PC-3 (cell line): ENCODE measurements at regions of chr17 and their contacts with region 1.

Region 1: GRCh38 chr17:63549946-63550807 is at the start of gene DCAF7:
- DNase-seq: peak; percentile 100
- ATAC-seq: peak; percentile 91
- H3K4me3 ChIP-seq: peak within 1 kb of the TSS; percentile 89
- H3K27ac ChIP-seq: peak within 1 kb of the TSS; percentile 65
- H3K4me1 ChIP-seq: peaks cover 22% of the 10 kb centered on the region
- H3K27me3 ChIP-seq: no peaks in the 10 kb centered on the region
- CTCF ChIP-seq: no peak
- total RNA-seq, gene DCAF7: 46.5 and 55.5 TPM in 2 replicates

Region 2: GRCh38 chr17:63425482-63425881 is 124.7 kb before region 1 on chr17:
- CTCF ChIA-PET with region 1: interaction called, 4 read pairs
- POLR2A ChIA-PET with region 1: no interaction called
- intact Hi-C with region 1: loop called (anchors 5 kb)
- DNase-seq: peak; percentile 96
- ATAC-seq: peak; percentile 77
- H3K4me3 ChIP-seq: no peak overlapping the region
- H3K27ac ChIP-seq: no peak overlapping the region
- H3K4me1 ChIP-seq: peaks cover 20% of the 10 kb centered on the region
- H3K27me3 ChIP-seq: no peaks in the 10 kb centered on the region
- CTCF ChIP-seq: peak; percentile 98

Region 3: GRCh38 chr17:63445979-63446691 is 104.0 kb before region 1 on chr17 and contains the start of gene CYB561:
- CTCF ChIA-PET with region 1: no interaction called
- POLR2A ChIA-PET with region 1: interaction called, 11 read pairs
- intact Hi-C with region 1: no loop called
- DNase-seq: peak; percentile 90
- ATAC-seq: peak; percentile 77
- H3K4me3 ChIP-seq: peak within 1 kb of the TSS; percentile 93
- H3K27ac ChIP-seq: peak within 1 kb of the TSS; percentile 91
- H3K4me1 ChIP-seq: peaks cover 41% of the 10 kb centered on the region
- H3K27me3 ChIP-seq: no peaks in the 10 kb centered on the region
- CTCF ChIP-seq: peak; percentile 55
- total RNA-seq, gene CYB561: 125 and 145 TPM in 2 replicates

Region 4: DNA sequence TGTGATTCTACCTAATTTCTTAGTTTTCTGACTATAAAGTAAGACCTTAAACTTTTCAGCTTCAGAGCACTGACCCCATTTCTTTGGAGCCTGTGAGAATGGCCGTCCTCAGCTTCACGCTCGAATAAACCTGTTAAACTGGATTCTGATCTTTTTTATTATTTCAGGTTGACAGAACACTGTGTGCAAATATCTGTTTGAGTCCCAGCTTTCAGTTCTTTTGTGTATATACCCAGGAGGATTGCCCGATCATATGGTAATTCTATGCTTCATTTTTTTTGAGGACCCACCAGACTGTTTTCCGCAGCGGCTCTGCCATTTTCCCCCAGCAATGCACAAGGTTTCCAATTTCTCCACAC is 46.9 kb before region 1 on chr17:
- CTCF ChIA-PET with region 1: no interaction called
- POLR2A ChIA-PET with region 1: no interaction called
- intact Hi-C with region 1: loop called (anchors 2 kb)
- DNase-seq: peak; percentile 54
- ATAC-seq: peak; percentile 34; the same call in 1 of the 2 replicates
- H3K4me3 ChIP-seq: 0 out of 2 replicates have a peak overlapping the region, but pooled peaks have one; percentile 17
- H3K27ac ChIP-seq: no peak overlapping the region
- H3K4me1 ChIP-seq: peaks cover 5% of the 10 kb centered on the region; the same call in 1 of the 2 replicates
- H3K27me3 ChIP-seq: peaks cover 19% of the 10 kb centered on the region; the same call in 1 of the 2 replicates
- CTCF ChIP-seq: no peak

Region 5: DNA sequence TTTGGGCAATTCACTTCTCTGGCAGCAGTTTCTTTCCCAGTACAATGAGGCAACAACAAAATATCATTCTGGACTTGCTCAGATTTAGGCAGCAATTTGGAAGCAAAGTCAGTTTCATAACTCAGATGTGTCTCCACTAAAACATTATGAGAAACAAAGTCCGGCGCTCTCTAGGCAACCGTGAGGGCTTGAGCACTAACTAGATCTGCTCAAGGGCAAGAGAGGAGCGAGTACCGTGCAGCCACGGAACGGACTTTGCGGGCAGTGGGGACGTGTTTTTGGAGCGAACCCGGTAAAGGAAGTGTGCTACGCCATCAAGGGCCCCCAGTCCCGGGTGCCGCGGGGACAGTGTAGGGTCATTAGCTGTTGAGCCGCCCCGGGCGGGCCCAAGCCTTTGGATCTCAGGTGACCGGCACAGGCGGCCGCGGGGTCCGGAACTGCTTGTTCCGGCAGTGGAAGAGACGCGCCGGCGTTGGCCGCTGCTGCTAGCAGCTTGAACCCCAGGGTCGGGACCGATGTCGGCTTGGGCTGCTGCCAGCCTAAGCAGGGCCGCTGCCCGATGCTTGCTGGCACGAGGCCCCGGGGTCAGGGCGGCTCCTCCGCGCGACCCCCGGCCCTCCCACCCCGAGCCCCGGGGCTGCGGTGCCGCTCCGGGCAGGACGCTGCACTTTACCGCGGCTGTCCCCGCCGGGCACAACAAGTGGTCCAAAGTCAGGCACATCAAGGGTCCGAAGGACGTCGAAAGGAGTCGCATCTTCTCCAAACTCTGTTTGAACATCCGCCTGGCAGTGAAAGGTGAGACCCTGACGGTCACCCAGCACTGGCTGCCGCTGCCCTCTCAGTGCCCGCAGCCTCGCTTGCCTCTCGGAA is 50.6 kb after region 1 on chr17 and contains the start of gene TACO1:
- CTCF ChIA-PET with region 1: no interaction called
- POLR2A ChIA-PET with region 1: interaction called, 8 read pairs
- intact Hi-C with region 1: loop called (anchors 1 kb)
- DNase-seq: peak; percentile 92
- ATAC-seq: peak; percentile 94
- H3K4me3 ChIP-seq: peak within 1 kb of the TSS; percentile 91
- H3K27ac ChIP-seq: peak within 1 kb of the TSS; percentile 40
- H3K4me1 ChIP-seq: peaks cover 16% of the 10 kb centered on the region
- H3K27me3 ChIP-seq: no peaks in the 10 kb centered on the region
- CTCF ChIP-seq: no peak
- total RNA-seq, gene TACO1: 47.9 and 70.0 TPM in 2 replicates